ENCODE measurements at regions of chr9 and their contacts with region 1.

Region 1: DNA sequence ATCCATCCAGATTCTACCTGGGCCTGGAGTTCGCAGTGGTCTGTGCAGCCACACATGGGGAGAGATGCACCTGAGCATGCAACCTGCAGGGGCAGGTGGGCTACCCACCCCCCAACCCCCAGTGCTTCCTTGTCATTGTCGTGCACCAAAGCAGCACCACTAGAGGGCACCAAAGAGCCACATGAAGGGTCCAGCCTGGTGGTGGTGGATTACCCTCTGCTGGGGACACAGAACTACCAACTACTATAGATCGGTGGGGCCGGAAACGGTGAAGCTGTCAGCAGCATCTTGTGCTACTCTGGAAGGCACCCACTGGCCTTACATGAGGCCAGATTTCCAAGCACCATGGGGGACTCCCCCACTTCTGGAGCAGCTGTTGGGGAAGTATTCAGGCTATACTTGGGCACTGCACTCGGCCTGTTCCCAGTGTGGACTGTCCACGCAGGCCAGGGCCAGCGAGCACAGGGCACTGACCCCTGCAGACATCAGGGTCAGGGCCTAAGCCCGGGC is 60.2 kb upstream of the TBC1D2 start:
- DNase-seq: peak; percentile 66 to 81
- ATAC-seq: peak; percentile 81 to 93 (median 88)
- H3K4me3 ChIP-seq: no peak overlapping the region
- H3K27ac ChIP-seq: no peak overlapping the region
- H3K4me1 ChIP-seq: peaks cover 0 to 4% (median 0%) of the 10 kb centered on the region in 9 donors
- H3K27me3 ChIP-seq: peaks cover 0 to 11% (median 0%) of the 10 kb centered on the region in 7 donors
- CTCF ChIP-seq: peak; percentile 83 to 92 (median 90)

Region 2: DNA sequence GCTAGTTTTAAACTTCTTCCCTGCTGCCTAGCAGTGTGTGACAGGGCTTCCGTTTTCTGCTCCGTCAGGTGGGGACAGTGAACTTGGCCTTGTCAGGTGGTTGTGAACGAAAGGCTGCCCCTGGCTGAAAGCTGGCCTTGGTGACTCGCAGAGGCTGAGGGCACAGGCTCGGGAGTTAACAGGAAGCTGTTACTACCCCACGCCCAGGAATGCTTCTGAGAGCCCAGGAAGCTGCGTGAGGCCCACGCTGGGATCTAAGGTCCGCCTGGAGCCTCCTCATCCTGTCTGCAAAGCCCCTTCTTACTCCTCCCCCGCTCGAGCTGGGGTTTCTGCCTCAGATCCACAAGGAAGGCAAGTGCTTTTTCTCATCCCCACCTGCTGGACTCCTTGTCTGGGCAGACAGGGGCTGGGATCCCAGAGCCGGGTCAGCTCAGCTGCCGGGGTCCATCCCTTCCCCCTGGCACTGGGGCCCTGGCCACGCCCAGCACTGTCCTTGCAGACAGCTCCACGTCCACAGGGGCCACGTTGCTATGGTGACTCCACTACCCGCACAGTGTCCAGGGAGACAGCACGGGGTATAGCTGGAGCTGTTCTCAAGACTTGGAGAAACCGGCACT is 64.6 kb after region 1 on chr9:
- intact Hi-C with region 1: no loop called
- DNase-seq: no peak
- ATAC-seq: peak in 3 of 8 donors; percentile 29 to 49 (median 47)
- H3K4me3 ChIP-seq: no peak overlapping the region
- H3K27ac ChIP-seq: no peak overlapping the region
- H3K4me1 ChIP-seq: peaks cover 0 to 8% (median 0%) of the 10 kb centered on the region in 9 donors
- H3K27me3 ChIP-seq: peaks cover 0 to 6% (median 0%) of the 10 kb centered on the region in 7 donors
- CTCF ChIP-seq: no peak

Region 3: GRCh38 chr9:98536542-98537173 is 221.1 kb after region 1 on chr9:
- intact Hi-C with region 1: no loop called
- DNase-seq: no peak
- ATAC-seq: no peak
- H3K4me3 ChIP-seq: no peak overlapping the region
- H3K27ac ChIP-seq: no peak overlapping the region
- H3K4me1 ChIP-seq: no peaks in the 10 kb centered on the region
- H3K27me3 ChIP-seq: peaks cover 0 to 8% (median 0%) of the 10 kb centered on the region in 7 donors
- CTCF ChIP-seq: peak in 4 of 9 donors; percentile 9 to 41 (median 22)

Region 4: GRCh38 chr9:98568909-98569469 is 253.4 kb after region 1 on chr9:
- intact Hi-C with region 1: loop called in 1 of 10 experiments (anchors 10 kb)
- DNase-seq: no peak
- ATAC-seq: no peak
- H3K4me3 ChIP-seq: no peak overlapping the region
- H3K27ac ChIP-seq: no peak overlapping the region
- H3K4me1 ChIP-seq: no peaks in the 10 kb centered on the region
- H3K27me3 ChIP-seq: peaks cover 0 to 10% (median 3%) of the 10 kb centered on the region in 7 donors
- CTCF ChIP-seq: no peak

Region 5: GRCh38 chr9:98707166-98708102 is 391.8 kb after region 1 on chr9:
- intact Hi-C with region 1: loop called in 5 of 10 experiments (anchors 2 to 10 kb)
- DNase-seq: peak; percentile 28 to 29
- ATAC-seq: peak; percentile 63 to 91 (median 82)
- H3K4me3 ChIP-seq: peak overlapping the region in 8 of 10 donors; percentile 6 to 39 (median 27)
- H3K27ac ChIP-seq: no peak overlapping the region
- H3K4me1 ChIP-seq: peaks cover 3 to 22% (median 15%) of the 10 kb centered on the region in 9 donors
- H3K27me3 ChIP-seq: peaks cover 13 to 97% (median 94%) of the 10 kb centered on the region in 7 donors
- CTCF ChIP-seq: peak in 8 of 9 donors; percentile 38 to 66 (median 54)

Region 6: DNA sequence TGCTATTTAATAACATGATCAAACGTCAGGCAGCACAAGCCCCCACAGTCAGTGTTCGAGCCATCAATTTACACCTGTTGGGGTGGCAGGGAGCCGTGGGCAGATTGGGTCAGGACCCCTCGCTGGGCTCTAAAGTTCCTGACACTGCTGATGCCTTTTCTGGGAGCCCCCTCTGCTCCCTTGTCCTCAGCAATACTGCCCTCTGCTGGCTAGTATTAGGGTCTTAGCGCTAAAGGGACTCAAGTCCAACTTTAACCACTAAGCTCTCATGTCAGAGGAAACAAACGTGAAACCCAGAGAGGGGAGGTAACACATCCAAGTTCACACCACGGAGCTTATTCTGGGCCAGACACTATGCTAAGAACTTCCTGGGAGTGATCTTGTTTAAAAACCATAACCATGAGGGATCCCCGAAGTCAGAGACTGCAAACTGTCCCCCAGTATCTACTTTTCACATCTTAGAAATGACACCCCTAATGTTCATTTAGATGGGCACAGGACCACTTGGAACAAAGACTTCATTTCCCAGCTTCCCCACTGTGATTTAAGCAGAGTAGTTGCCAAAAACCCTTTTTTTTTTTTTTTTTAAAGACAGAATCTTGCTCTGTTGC is 460.3 kb after region 1 on chr9:
- intact Hi-C with region 1: loop called (anchors 1 to 5 kb)
- DNase-seq: peak in 1 of 2 donors; percentile 45
- ATAC-seq: peak in 5 of 8 donors; percentile 26 to 68 (median 54)
- H3K4me3 ChIP-seq: no peak overlapping the region
- H3K27ac ChIP-seq: no peak overlapping the region
- H3K4me1 ChIP-seq: no peaks in the 10 kb centered on the region
- H3K27me3 ChIP-seq: no peaks in the 10 kb centered on the region
- CTCF ChIP-seq: peak; percentile 49 to 83 (median 70)

Measured in heart right ventricle (tissue), 16 donors.